ENCODE measurements at regions of chr3 and their contacts with region 1.

Region 1: GRCh38 chr3:123328851-123329635 is 119.8 kb downstream of the ADCY5 start:
- DNase-seq: peak; percentile 80 to 84
- ATAC-seq: peak; percentile 39 to 66 (median 58)
- H3K4me3 ChIP-seq: no peak overlapping the region
- H3K27ac ChIP-seq: peak overlapping the region in 8 of 10 donors; percentile 72 to 96 (median 92)
- H3K4me1 ChIP-seq: peaks cover 15 to 91% (median 52%) of the 10 kb centered on the region in 9 donors
- H3K27me3 ChIP-seq: no peaks in the 10 kb centered on the region
- CTCF ChIP-seq: peak; percentile 87 to 97 (median 93)

Region 2: DNA sequence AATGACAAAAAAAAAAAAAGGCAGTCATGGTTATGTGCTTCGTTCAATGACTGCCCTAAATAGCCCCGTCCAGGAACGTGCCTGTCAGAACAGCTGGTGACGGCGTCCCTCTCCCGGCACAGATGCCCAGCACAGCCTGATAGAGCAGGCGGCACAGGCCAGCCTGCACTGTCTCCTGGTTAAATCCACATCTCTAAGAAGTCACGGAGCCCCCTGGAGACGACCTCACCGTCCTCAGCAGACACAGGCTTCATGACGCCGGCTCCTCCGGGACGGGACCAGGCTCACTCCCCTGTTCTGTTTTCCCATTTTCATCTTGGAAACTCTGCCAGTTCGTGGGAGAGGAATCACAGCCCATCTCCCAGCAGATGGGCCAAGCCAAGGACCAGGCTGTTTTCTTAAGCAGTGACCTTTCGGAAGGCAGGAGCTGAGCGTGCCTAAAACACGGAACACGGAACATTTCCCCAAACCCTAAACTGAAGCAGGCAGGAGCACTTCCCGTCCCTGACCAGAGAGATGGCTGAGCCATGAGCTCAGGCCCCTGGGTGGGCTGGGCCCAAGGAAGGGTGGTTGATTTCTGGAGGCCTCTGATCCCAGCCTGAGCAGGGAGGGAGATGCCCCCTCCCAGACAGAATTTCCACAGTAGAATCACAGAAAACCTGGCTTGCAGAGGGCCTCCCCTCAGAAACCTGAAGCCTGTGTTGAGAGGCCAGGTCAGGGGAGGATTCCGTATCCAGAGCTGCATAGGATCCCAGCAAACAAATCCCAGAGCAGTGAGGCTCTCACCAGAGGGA is 84.0 kb after region 1 on chr3:
- intact Hi-C with region 1: loop called in 1 of 10 experiments (anchors 5 kb)
- DNase-seq: peak; percentile 56 to 68
- ATAC-seq: peak; percentile 59 to 91 (median 84)
- H3K4me3 ChIP-seq: peak overlapping the region in 5 of 10 donors; percentile 0 to 29 (median 17)
- H3K27ac ChIP-seq: peak overlapping the region; percentile 32 to 92 (median 86)
- H3K4me1 ChIP-seq: peaks cover 36 to 99% (median 78%) of the 10 kb centered on the region in 9 donors
- H3K27me3 ChIP-seq: no peaks in the 10 kb centered on the region
- CTCF ChIP-seq: peak in 2 of 9 donors; percentile 14 to 21

Region 3: GRCh38 chr3:123489400-123490004 is 160.5 kb after region 1 on chr3:
- intact Hi-C with region 1: loop called (anchors 1 to 2 kb)
- DNase-seq: peak; percentile 76 to 80
- ATAC-seq: peak; percentile 75 to 90 (median 85)
- H3K4me3 ChIP-seq: peak overlapping the region in 2 of 10 donors; percentile 0 to 8
- H3K27ac ChIP-seq: peak overlapping the region in 7 of 10 donors; percentile 31 to 74 (median 68)
- H3K4me1 ChIP-seq: peaks cover 0 to 52% (median 7%) of the 10 kb centered on the region in 9 donors
- H3K27me3 ChIP-seq: no peaks in the 10 kb centered on the region
- CTCF ChIP-seq: peak; percentile 61 to 91 (median 88)

Region 4: DNA sequence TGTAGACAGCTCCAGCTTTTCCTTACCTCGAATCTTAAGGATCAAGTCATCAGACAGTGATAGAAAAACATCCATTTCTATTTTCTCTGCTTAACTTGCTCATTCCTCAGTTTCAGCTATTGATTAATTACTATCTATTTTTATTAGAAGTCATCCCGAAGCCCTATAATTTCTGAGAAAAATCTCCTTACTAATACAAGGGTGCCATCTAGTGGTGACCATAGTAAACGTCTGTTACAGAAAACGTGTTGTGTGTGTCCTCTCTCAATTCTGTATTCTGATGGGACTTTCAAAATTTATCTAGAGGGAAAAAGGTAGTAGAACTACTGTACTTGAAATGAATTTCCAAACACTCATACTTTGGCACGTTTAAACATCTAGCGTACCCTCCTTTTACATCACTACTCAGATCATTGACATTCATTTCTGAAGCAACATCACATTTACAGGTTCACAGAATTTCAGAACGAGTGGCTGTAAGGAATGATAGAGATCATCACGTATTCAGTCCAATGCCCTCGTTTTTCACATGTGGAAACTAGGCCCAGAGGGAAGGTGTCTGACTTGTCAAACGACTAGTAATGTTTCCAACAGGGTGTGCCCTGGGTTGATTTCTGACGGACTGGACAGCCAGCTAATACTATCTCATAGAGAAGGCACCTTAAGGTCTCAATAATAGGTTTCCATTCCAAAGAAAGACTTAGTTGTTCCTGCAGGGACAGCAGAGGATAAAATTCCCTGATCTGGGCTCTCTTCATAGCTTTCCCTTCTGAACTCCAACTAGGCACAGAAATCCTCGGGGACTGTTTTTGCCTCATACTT is 230.2 kb after region 1 on chr3:
- intact Hi-C with region 1: loop called in 9 of 10 experiments (anchors 2 to 5 kb)
- DNase-seq: no peak
- ATAC-seq: peak in 2 of 8 donors; percentile 48 to 56
- H3K4me3 ChIP-seq: no peak overlapping the region
- H3K27ac ChIP-seq: no peak overlapping the region
- H3K4me1 ChIP-seq: peaks cover 0 to 3% (median 0%) of the 10 kb centered on the region in 9 donors
- H3K27me3 ChIP-seq: no peaks in the 10 kb centered on the region
- CTCF ChIP-seq: peak; percentile 75 to 93 (median 85)